ENCODE measurements at regions of chr10 and their contacts with region 1.

Region 1: DNA sequence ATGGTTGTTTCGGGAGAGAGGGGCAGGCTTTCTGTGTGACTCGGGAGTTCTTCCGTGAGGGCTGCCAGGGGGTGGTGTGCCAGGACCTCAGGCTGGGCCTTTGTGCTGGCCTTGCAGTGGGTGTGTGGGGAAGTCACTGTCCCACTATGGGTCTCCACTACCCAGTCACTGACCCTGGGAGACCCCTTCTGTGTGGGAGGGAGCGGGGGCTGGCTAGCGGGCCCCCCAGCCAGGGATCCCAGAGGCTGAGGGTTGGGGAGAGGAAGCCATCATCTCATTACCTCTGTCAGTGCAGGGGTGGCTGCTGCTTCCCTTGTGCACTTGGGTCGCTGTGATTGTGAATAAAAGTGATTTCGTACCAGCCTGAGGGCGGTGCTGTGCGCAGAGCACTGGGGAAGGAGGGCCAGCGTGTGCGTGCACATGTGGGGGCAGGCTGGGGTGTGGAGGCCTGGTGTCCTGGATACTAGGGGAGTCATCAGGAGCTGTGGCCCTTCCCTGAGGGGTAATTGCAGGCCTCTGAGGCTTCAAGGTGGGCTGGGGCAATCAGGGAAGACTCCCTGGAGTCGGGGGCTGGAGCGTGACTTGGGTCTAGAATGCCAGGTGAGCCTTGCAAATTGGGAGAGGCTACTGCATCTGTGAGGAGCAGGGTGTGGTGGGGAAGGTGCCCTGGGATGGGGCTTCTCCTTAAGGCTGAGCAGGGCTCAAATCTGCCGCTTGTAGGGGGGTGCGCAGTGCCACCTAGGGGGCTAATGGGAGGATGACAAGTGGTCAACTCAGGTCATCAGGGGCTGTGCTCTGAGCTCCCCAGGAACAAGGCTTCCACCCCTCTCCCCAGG is 98.9 kb downstream of the NEURL1 start:
- DNase-seq: peak; percentile 20
- ATAC-seq: peak; percentile 89
- H3K4me3 ChIP-seq: no peak overlapping the region
- H3K27ac ChIP-seq: no peak overlapping the region
- H3K4me1 ChIP-seq: no peaks in the 10 kb centered on the region; the same call in 1 of the 2 replicates
- H3K27me3 ChIP-seq: no peaks in the 10 kb centered on the region
- CTCF ChIP-seq: peak; percentile 95

Region 2: DNA sequence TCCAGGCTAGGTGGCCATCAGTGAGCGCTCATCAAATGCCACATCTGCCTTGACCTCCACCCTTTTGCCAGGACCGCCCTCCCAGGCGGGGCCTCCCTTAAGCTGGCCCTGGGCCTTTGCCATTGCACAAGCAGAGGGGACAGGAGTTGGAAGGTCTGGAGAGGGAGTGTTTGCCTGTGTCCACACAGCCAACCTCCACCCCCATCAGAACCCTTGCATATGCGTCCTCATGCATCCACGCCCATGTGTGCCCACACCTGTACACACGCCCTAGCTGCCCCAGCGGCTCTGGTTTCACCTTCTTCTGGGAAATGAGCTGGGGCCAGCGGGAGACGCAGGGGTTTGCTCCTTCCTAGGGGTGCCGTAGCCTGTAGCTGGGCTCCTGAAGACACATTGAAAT is 34.9 kb before region 1 on chr10:
- CTCF ChIA-PET with region 1: interaction called, 11 read pairs
- POLR2A ChIA-PET with region 1: no interaction called
- in situ Hi-C with region 1: no loop called
- intact Hi-C with region 1: no loop called
- DNase-seq: no peak
- ATAC-seq: no peak
- H3K4me3 ChIP-seq: no peak overlapping the region
- H3K27ac ChIP-seq: no peak overlapping the region
- H3K4me1 ChIP-seq: no peaks in the 10 kb centered on the region
- H3K27me3 ChIP-seq: peaks cover 11% of the 10 kb centered on the region
- CTCF ChIP-seq: no peak